CD14-positive monocyte (primary cell): ENCODE measurements at regions of chr1 and their contacts with region 1.

Region 1: GRCh38 chr1:35451125-35451528 is 106.1 kb downstream of the KIAA0319L start:
- DNase-seq: peak; percentile 56 to 73 (median 69)
- H3K4me3 ChIP-seq: peak overlapping the region in 1 of 3 experiments; percentile 45
- H3K4me3 Mint-ChIP-seq: peak overlapping the region in 1 of 2 donors; percentile 70
- H3K27ac ChIP-seq: peak overlapping the region in 1 of 2 donors; percentile 92
- H3K27ac Mint-ChIP-seq: peak overlapping the region in 4 of 7 donors; percentile 92 to 96 (median 94)
- H3K4me1 ChIP-seq: peaks cover 100% of the 10 kb centered on the region in 2 donors
- H3K4me1 Mint-ChIP-seq: peaks cover 7% of the 10 kb centered on the region
- H3K27me3 ChIP-seq: no peaks in the 10 kb centered on the region
- H3K27me3 Mint-ChIP-seq: no peaks in the 10 kb centered on the region
- CTCF ChIP-seq: peak; percentile 77

Region 2: GRCh38 chr1:35345439-35345981 is 105.6 kb before region 1 on chr1:
- intact Hi-C with region 1: loop called in 1 of 2 experiments (anchors 10 kb)
- DNase-seq: peak; percentile 51 to 77 (median 77)
- H3K4me3 ChIP-seq: peak overlapping the region; percentile 75 to 84 (median 78)
- H3K4me3 Mint-ChIP-seq: peak overlapping the region; percentile 82 to 90
- H3K27ac ChIP-seq: peak overlapping the region; percentile 92 to 97
- H3K27ac Mint-ChIP-seq: peak overlapping the region; percentile 92 to 97 (median 96)
- H3K4me1 ChIP-seq: peaks cover 18 to 23% of the 10 kb centered on the region in 2 donors
- H3K4me1 Mint-ChIP-seq: peaks cover 26% of the 10 kb centered on the region
- H3K27me3 ChIP-seq: no peaks in the 10 kb centered on the region
- H3K27me3 Mint-ChIP-seq: peaks cover 0 to 2% (median 0%) of the 10 kb centered on the region in 3 donors
- CTCF ChIP-seq: peak; percentile 69

Region 3: DNA sequence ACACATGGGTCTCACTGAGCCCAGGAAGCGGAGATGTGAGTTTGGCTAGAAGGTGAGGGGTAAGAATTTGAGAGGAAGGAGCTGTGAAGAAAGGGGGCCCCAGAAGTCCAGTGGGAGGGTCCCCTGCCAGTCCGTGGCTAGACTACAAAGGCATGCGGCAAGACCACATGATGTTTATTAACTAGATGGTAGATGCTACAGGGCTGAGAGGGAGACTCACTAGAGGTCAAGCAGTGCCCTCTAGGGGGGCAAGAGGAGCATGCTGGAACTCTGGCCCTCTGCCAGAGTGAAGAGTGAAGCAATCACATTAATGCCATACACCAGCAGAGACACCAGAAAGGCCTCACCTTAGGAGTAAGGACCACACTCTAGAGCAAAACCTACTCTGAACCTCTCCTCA is 93.9 kb after region 1 on chr1:
- intact Hi-C with region 1: loop called in 1 of 2 experiments (anchors 5 kb)
- DNase-seq: peak; percentile 73 to 83 (median 79)
- H3K4me3 ChIP-seq: peak overlapping the region in 2 of 3 experiments; percentile 25 to 34
- H3K4me3 Mint-ChIP-seq: peak overlapping the region; percentile 73 to 82
- H3K27ac ChIP-seq: peak overlapping the region; percentile 24 to 66
- H3K27ac Mint-ChIP-seq: peak overlapping the region in 6 of 7 donors; percentile 56 to 89 (median 79)
- H3K4me1 ChIP-seq: peaks cover 44 to 48% of the 10 kb centered on the region in 2 donors
- H3K4me1 Mint-ChIP-seq: peaks cover 52% of the 10 kb centered on the region
- H3K27me3 ChIP-seq: no peaks in the 10 kb centered on the region
- H3K27me3 Mint-ChIP-seq: peaks cover 0 to 2% (median 0%) of the 10 kb centered on the region in 3 donors
- CTCF ChIP-seq: peak; percentile 74

Region 4: DNA sequence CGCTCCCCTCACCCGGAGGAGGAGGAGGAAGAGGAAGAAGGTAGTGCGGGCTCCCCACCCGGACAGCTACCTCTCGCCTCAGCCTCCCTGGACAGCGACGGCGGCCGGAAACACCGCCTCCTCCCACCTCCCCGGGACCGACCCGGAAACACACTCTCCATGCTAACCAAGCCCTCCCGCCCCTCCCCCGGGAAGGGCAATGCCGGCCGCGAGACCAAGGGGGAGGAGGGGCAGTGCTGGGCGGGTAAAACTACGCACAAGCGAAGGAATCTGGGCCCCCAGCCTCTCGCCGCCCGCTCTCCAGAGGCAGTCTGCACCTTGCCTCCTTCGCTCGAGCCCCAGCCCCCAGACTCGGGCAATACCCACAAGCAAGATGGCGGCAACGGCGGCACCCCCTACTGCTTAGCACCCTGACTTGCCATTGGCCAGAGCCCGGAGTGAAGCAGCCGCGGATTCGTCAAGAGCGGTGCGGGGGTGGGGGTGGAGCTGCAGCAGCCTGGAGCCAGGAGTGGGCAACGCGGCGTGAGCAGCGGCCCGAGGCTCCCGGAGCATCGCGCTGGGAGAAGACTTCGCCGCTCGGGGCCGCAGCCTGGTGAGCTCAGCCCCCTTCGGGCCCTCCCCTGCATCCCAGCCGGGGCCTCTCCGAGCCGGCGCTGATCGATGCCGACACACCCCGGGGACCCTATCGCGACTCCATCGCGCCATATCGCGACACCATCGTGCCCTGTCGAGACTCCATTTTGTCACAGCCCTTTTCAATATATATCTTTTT is 106.4 kb after region 1 on chr1 and contains the starts of genes KIAA0319L and NCDN:
- intact Hi-C with region 1: loop called (anchors 5 kb)
- DNase-seq: peak; percentile 90 to 95 (median 93)
- H3K4me3 ChIP-seq: peak within 1 kb of the TSS; percentile 82 to 98 (median 91)
- H3K4me3 Mint-ChIP-seq: peak within 1 kb of the TSS; percentile 93 to 95
- H3K27ac ChIP-seq: peak within 1 kb of the TSS; percentile 76 to 86
- H3K27ac Mint-ChIP-seq: peak within 1 kb of the TSS; percentile 83 to 94 (median 89)
- H3K4me1 ChIP-seq: peaks cover 27 to 39% of the 10 kb centered on the region in 2 donors
- H3K4me1 Mint-ChIP-seq: peaks cover 64% of the 10 kb centered on the region
- H3K27me3 ChIP-seq: no peaks in the 10 kb centered on the region
- H3K27me3 Mint-ChIP-seq: peaks cover 0 to 1% (median 0%) of the 10 kb centered on the region in 3 donors
- CTCF ChIP-seq: no peak
- polyA plus RNA-seq, gene KIAA0319L: 20.6 to 75.3 (median 28.6) TPM
- polyA plus RNA-seq, gene NCDN: 5.0 to 7.9 (median 7.0) TPM